ENCODE measurements at regions of chr14 and their contacts with region 1.

Region 1: DNA sequence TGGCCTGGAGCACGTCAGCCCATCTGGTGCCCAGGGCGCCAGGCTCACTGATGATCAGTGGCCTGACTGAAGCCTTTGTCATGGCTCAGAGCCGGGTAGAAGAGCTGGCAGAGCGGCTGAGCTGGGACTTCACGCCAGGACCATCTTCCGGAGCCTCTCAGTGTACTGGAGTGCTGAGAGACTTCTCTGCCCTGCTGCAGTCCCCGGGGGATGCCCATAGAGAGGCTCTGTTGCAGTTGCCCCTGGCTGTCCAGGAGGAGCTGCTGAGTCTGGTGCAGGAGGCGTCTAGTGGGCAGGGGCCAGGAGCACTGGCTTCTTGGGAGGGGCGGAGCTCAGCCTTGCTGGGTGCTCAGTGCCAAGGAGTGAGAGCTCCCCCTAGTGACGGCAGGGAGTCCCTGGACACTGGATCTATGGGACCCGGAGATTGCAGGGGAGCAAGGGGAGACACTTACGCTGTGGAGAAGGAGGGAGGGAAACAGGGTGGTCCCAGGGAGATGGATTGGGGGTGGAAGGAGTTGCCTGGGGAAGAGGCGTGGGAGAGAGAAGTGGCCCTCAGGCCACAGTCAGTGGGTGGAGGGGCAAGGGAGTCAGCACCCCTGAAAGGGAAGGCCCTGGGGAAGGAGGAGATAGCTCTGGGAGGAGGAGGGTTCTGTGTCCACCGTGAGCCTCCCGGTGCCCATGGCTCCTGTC is 2.0 kb downstream of the KHNYN start:
- DNase-seq: peak; percentile 73
- ATAC-seq: peak; percentile 41
- H3K4me3 Mint-ChIP-seq: peak overlapping the region; percentile 93
- H3K27ac Mint-ChIP-seq: peak overlapping the region; percentile 97
- H3K4me1 Mint-ChIP-seq: peaks cover 53% of the 10 kb centered on the region
- H3K27me3 Mint-ChIP-seq: no peaks in the 10 kb centered on the region
- CTCF ChIP-seq: peak; percentile 49

Region 2: DNA sequence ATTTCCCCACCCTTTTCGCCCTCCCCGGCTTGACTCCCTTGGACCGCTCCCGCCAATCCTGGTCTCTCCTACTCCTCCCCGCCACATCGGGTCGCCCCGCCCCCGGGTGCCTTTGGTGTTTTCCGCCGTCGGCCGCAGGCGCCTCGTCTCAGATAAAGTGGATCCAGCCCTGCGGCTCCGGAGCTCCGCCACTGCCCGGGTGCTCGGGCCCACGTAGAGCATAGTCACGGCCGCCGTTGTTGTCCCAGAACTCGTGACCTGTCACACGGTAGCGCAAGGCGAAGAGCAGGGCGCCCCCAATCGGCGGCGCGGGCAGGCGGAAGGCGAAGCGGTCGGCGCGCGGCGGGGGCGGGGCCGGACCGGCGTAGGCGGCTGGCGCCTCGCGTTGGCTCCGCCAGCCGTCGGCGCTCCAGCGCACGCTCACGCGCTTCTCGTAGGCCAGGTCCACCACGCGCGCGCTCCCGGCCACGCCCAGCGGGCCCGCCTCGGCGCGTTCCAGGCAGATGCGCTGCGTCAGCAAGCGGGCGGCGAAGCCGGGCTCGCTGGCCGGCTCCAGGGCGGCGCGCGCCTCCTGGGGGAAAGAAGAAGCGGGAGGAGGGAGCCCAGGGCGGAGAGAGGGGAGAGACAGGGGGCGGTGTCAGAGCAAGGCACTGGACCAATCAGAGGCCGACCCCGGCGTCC is 1130.3 kb before region 1 on chr14:
- CTCF ChIA-PET with region 1: no interaction called
- POLR2A ChIA-PET with region 1: interaction called, 4 read pairs
- intact Hi-C with region 1: loop called (anchors 5 kb)
- DNase-seq: peak; percentile 99
- ATAC-seq: peak; percentile 78
- H3K4me3 Mint-ChIP-seq: peak overlapping the region; percentile 99
- H3K27ac Mint-ChIP-seq: peak overlapping the region; percentile 90
- H3K4me1 Mint-ChIP-seq: peaks cover 37% of the 10 kb centered on the region
- H3K27me3 Mint-ChIP-seq: no peaks in the 10 kb centered on the region
- CTCF ChIP-seq: no peak

Region 3: GRCh38 chr14:24114536-24115450 is 316.9 kb before region 1 on chr14 and contains the starts of genes DCAF11 and NRL:
- CTCF ChIA-PET with region 1: no interaction called
- POLR2A ChIA-PET with region 1: interaction called, 16 read pairs
- intact Hi-C with region 1: loop called (anchors 2 kb)
- DNase-seq: peak; percentile 97
- ATAC-seq: peak; percentile 83
- H3K4me3 Mint-ChIP-seq: peak within 1 kb of the TSS; percentile 99
- H3K27ac Mint-ChIP-seq: peak within 1 kb of the TSS; percentile 100
- H3K4me1 Mint-ChIP-seq: peaks cover 27% of the 10 kb centered on the region
- H3K27me3 Mint-ChIP-seq: no peaks in the 10 kb centered on the region
- CTCF ChIP-seq: no peak
- total RNA-seq, gene DCAF11: 84.3 and 86.5 TPM in 2 replicates
- total RNA-seq, gene NRL: 5.4 and 5.5 TPM in 2 replicates

Region 4: DNA sequence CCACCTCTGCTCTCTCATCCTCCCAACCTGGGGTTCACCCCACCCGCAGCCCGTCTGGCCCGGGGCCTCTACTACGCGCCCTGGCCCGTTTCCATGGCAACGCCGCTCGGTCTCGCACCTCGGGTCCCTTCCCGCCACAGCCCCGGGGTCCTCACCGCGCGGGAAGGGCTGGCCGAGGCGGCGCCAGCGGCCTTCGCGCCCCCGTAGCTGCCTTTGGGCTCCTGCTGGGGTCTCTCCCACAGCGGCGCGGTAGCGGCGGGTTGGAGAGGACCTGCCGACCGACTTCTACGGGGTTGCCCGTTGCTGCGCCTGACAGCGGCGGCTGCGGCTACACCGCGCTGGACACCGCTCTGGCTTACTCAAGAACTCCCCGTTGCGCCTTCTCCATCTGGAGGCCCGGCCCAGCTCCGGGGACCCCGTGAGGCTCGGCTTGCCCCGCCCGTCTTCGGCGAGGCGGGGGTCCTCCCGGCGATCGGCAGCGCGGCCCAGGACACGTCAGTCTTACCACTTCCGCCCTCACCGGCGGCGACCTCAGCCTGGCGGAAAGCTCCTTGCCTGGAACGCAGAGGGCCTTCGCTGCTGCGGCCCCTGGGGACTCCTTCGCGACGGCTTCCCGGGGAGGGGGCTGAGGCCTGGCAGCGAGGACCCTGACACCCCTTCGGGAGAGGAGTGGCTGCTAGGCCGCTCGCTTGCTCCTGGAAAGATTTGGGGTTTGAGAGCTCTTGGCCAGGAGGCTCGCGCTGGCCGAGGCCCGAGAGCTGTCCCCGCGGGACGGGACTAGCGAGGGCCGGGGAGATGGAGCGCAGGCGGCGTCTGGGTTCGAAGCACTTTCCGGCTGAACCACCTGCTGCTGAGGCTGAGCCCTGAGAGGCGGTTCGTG is 236.3 kb before region 1 on chr14 and contains the start of gene TM9SF1:
- CTCF ChIA-PET with region 1: interaction called, 5 read pairs
- POLR2A ChIA-PET with region 1: interaction called, 4 read pairs
- intact Hi-C with region 1: loop called (anchors 5 kb)
- DNase-seq: peak; percentile 91
- ATAC-seq: peak; percentile 83
- H3K4me3 Mint-ChIP-seq: peak within 1 kb of the TSS; percentile 96
- H3K27ac Mint-ChIP-seq: peak within 1 kb of the TSS; percentile 97
- H3K4me1 Mint-ChIP-seq: peaks cover 48% of the 10 kb centered on the region
- H3K27me3 Mint-ChIP-seq: no peaks in the 10 kb centered on the region
- CTCF ChIP-seq: no peak
- total RNA-seq, gene TM9SF1: 24.5 and 26.3 TPM in 2 replicates

Region 5: GRCh38 chr14:24271134-24271833 is 160.4 kb before region 1 on chr14 and contains the start of gene RABGGTA:
- CTCF ChIA-PET with region 1: interaction called, 3 read pairs
- POLR2A ChIA-PET with region 1: interaction called, 18 read pairs
- intact Hi-C with region 1: no loop called
- DNase-seq: peak; percentile 88
- ATAC-seq: peak; percentile 83
- H3K4me3 Mint-ChIP-seq: peak within 1 kb of the TSS; percentile 90
- H3K27ac Mint-ChIP-seq: peak within 1 kb of the TSS; percentile 96
- H3K4me1 Mint-ChIP-seq: peaks cover 57% of the 10 kb centered on the region
- H3K27me3 Mint-ChIP-seq: no peaks in the 10 kb centered on the region
- CTCF ChIP-seq: no peak
- total RNA-seq, gene RABGGTA: 53.6 and 70.5 TPM in 2 replicates

Region 6: GRCh38 chr14:24339284-24340151 is 92.2 kb before region 1 on chr14 and contains the start of gene RIPK3:
- CTCF ChIA-PET with region 1: interaction called, 353 read pairs
- POLR2A ChIA-PET with region 1: interaction called, 216 read pairs
- intact Hi-C with region 1: loop called (anchors 1 kb)
- DNase-seq: peak; percentile 66
- ATAC-seq: peak; percentile 96
- H3K4me3 Mint-ChIP-seq: peak within 1 kb of the TSS; percentile 94
- H3K27ac Mint-ChIP-seq: peak within 1 kb of the TSS; percentile 92
- H3K4me1 Mint-ChIP-seq: peaks cover 32% of the 10 kb centered on the region
- H3K27me3 Mint-ChIP-seq: peaks cover 13% of the 10 kb centered on the region
- CTCF ChIP-seq: no peak
- total RNA-seq, gene RIPK3: 38.9 and 39.2 TPM in 2 replicates

Region 7: GRCh38 chr14:24411443-24412389 is 20.0 kb before region 1 on chr14:
- CTCF ChIA-PET with region 1: interaction called, 6 read pairs
- POLR2A ChIA-PET with region 1: interaction called, 5 read pairs
- intact Hi-C with region 1: loop called (anchors 1 kb)
- DNase-seq: no peak
- ATAC-seq: peak; percentile 81
- H3K4me3 Mint-ChIP-seq: no peak overlapping the region
- H3K27ac Mint-ChIP-seq: no peak overlapping the region
- H3K4me1 Mint-ChIP-seq: no peaks in the 10 kb centered on the region
- H3K27me3 Mint-ChIP-seq: peaks cover 14% of the 10 kb centered on the region
- CTCF ChIP-seq: no peak

Measured in activated B cell treated with CpG ODN at 0.5 μM for 24 hours (primary cell).